Dorsolateral prefrontal cortex (tissue), 120 donors: ENCODE measurements at regions of chr3 and their contacts with region 1.

Region 1: DNA sequence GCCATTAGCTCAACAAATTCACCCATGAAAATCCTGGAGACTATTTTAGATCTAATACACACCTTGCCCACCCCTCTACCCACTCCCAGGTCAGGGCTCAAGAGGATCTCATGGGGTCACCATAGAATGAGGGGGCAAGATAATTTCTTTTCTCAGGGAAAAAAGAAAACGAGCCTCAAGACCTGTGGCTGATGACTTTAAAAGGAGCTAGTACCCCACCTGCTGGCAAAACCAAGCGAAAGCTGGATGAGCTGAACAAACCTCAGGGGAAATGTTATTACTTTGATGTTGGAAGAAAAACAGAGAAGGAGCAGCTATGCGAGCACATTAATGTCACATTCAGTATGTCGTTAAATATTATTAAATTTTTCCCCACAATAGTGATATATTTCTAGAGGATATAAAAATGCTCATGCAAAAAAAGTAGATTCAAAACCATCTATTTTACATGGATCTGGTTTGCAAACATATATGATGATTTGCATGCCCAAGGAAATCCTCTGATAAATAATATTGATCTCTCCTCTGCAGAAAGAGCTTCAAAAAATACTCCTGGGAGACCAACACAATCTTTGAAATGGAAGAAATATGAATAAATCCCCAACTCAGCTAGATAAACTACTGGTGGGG is 37.7 kb downstream of the PLD1 start:
- DNase-seq: peak in 5 of 10 donors; percentile 53 to 78 (median 64)
- H3K4me3 ChIP-seq: no peak overlapping the region
- H3K27ac ChIP-seq: peak overlapping the region in 55 of 59 donors; percentile 11 to 100 (median 78)
- H3K27me3 ChIP-seq: no peaks in the 10 kb centered on the region
- CTCF ChIP-seq: peak; percentile 52 to 90 (median 77)

Region 2: DNA sequence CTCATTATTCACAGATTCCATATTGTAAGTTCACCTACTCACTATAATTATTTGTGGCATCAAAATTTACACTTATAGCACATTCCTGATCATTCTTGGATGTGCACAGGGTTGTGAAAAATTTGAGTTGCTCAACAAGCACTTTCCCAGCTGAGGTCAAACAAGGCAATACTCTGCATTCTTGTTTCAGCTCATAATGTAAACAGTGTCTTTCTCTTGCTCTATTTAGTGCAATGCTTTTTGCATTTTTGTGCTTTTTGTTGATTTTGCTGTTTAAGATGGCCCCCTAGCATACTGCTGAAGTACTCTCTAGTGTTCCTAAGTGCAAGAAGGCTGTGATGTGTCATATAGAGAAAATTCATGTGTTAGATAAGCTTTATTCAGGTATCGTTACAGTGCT is 245.7 kb before region 1 on chr3:
- intact Hi-C with region 1: no loop called
- DNase-seq: no peak
- H3K4me3 ChIP-seq: no peak overlapping the region
- H3K27ac ChIP-seq: no peak overlapping the region
- H3K27me3 ChIP-seq: no peaks in the 10 kb centered on the region
- CTCF ChIP-seq: no peak

Region 3: GRCh38 chr3:171566803-171567422 is 205.6 kb before region 1 on chr3:
- intact Hi-C with region 1: loop called in 1 of 2 experiments (anchors 5 kb)
- DNase-seq: no peak
- H3K4me3 ChIP-seq: no peak overlapping the region
- H3K27ac ChIP-seq: no peak overlapping the region
- H3K27me3 ChIP-seq: no peaks in the 10 kb centered on the region
- CTCF ChIP-seq: peak; percentile 58 to 98 (median 87)

Region 4: DNA sequence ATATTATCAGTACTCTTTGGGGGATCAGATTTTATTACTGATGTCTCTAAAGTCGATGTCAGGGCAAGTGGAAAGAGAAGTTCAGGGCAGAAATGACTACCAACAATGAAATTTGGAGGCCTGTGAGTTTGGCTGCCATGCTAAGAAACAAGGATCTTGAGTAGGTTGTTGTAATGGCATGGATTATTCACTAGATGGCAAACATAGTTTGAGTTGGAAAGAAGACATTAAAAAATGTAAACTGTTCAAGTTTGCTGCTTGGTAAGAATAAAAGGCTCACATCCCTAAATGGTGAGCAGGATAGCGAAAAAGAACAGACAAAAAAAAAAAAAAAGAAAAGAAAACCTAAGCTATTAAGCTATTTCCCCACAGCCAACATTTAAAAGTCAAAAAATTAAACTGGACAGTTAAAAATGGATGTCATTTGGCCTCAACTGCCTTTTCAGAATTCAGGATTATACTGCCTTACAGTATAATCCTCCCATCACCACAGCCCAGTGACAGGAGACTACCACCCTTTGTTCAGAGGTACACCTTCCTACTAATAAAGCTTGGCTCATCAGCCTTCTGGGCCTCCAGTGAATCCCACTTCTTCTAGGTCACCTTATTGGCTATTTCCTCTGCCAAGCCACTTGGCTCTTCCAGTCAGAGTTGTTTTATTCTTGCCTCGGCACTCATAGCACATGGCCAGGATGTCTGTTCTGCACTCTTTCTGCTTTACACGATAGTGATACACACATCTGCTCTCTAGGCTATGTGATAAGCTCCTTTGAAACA is 126.0 kb before region 1 on chr3:
- intact Hi-C with region 1: loop called (anchors 2 to 5 kb)
- DNase-seq: no peak
- H3K4me3 ChIP-seq: no peak overlapping the region
- H3K27ac ChIP-seq: peak overlapping the region in 30 of 59 donors; percentile 1 to 61 (median 25)
- H3K27me3 ChIP-seq: no peaks in the 10 kb centered on the region
- CTCF ChIP-seq: peak; percentile 34 to 83 (median 70)

Region 5: DNA sequence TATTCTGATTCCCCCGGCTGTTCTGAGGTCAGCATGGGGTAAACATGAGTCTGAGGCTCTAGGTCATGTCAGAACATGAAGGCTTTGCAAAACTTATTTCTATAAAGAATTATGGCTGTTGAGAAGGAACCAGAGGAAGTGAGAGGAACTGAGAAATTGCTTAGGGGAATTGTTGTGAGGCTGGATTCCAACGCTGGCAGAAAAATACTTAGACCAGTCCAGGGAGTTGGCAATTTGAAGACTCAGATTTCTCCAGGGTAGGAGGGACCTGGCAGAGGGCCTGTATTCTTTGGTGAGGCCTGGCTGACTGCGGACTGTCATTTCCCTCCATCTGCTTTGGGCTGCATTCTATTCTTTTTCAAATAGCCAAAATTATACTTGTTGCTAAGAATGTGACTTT is 117.7 kb before region 1 on chr3:
- intact Hi-C with region 1: loop called in 1 of 2 experiments (anchors 5 kb)
- DNase-seq: no peak
- H3K4me3 ChIP-seq: no peak overlapping the region
- H3K27ac ChIP-seq: peak overlapping the region in 36 of 59 donors; percentile 1 to 58 (median 28)
- H3K27me3 ChIP-seq: no peaks in the 10 kb centered on the region
- CTCF ChIP-seq: no peak

Region 6: DNA sequence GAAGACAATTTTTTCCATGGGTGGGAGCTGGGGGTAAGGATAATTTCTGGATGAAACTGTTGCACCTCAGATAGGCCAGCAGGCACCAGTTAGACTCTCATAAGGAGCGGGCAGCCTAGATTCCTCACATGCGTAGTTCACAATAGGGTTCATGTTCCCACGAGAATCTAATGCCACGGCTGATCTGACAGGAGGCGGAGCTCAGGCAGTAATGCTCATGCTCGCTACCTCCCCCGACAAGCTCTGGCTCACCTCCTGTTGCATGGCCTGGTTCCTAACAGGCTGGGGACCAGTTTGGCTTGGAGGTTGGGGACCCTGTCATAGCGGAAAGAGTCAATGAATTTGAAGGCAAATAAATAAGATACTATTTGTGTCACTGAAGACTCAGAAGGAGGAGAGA is 67.7 kb before region 1 on chr3:
- intact Hi-C with region 1: loop called in 1 of 2 experiments (anchors 5 kb)
- DNase-seq: no peak
- H3K4me3 ChIP-seq: no peak overlapping the region
- H3K27ac ChIP-seq: peak overlapping the region in 1 of 59 donors; percentile 33
- H3K27me3 ChIP-seq: no peaks in the 10 kb centered on the region
- CTCF ChIP-seq: no peak

Region 7: GRCh38 chr3:171809821-171810628 is 37.5 kb after region 1 on chr3 and contains the start of gene PLD1:
- intact Hi-C with region 1: loop called (anchors 2 kb)
- DNase-seq: peak; percentile 11 to 87 (median 74)
- H3K4me3 ChIP-seq: peak within 1 kb of the TSS; percentile 59 to 95 (median 77)
- H3K27ac ChIP-seq: peak within 1 kb of the TSS; percentile 84 to 99 (median 97)
- H3K27me3 ChIP-seq: no peaks in the 10 kb centered on the region
- CTCF ChIP-seq: peak in 18 of 56 donors; percentile 3 to 41 (median 15)
- total RNA-seq, gene PLD1: 16.2 to 167 (median 39.0) TPM

Region 8: GRCh38 chr3:171829841-171830517 is 57.4 kb after region 1 on chr3:
- intact Hi-C with region 1: loop called in 1 of 2 experiments (anchors 5 kb)
- DNase-seq: peak in 9 of 10 donors; percentile 54 to 75 (median 60)
- H3K4me3 ChIP-seq: peak overlapping the region in 1 of 59 donors; percentile 13
- H3K27ac ChIP-seq: peak overlapping the region in 57 of 59 donors; percentile 19 to 87 (median 73)
- H3K27me3 ChIP-seq: no peaks in the 10 kb centered on the region
- CTCF ChIP-seq: peak in 55 of 56 donors; percentile 15 to 85 (median 61)